H1 (cell line): ENCODE measurements at regions of chr11 and their contacts with region 1.

Region 1: DNA sequence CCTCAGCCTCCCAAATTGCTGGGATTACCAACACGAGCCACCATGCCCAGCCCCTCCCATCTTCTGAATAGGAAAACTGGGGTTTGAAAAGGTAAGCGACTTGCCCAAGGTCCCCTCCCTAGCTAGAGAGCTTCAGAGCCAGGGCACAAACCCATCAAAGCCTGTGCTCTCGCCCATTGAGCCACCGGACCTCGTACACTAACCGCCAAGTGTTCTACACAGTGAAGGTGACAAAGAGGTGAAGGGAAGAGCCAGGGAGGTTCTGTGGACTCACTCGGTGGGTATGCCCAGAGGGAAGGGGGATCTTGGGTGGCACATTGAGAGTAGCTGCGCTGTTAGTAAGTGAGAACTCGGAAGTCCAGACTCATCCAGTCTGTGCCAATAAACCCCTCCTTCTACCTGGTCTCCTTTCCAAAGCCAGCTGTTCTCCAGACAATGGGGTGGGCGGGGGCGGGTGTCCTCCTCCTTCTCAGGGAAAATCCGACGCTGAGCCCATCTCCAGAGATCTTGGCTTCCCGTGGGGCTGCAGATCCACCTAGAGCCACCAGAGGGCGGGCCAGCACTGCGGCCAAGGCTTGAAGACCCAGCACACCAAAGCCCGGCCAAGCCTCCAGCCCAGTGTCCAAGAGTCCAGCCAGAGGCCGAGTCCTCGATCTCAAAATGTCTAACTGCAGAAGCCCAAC is 3.2 kb upstream of the RTN4RL2 start:
- DNase-seq: peak in 1 of 2 experiments; percentile 97
- H3K4me3 ChIP-seq: peak overlapping the region; percentile 62 to 97 (median 74); a peak in 7 of 8 replicates
- H3K27ac ChIP-seq: no peak overlapping the region
- H3K4me1 ChIP-seq: peaks cover 0 to 20% (median 11%) of the 10 kb centered on the region in 4 experiments; a peak in 6 of 7 replicates
- H3K27me3 ChIP-seq: peaks cover 8 to 30% (median 23%) of the 10 kb centered on the region in 4 experiments
- CTCF ChIP-seq: peak; percentile 92 to 97 (median 95)
- EP300 ChIP-seq: peak in 1 of 2 experiments; percentile 60; a peak in 1 of 3 replicates
- POLR2A ChIP-seq: no peak
- RAD21 ChIP-seq: peak; percentile 89 to 93

Region 2: DNA sequence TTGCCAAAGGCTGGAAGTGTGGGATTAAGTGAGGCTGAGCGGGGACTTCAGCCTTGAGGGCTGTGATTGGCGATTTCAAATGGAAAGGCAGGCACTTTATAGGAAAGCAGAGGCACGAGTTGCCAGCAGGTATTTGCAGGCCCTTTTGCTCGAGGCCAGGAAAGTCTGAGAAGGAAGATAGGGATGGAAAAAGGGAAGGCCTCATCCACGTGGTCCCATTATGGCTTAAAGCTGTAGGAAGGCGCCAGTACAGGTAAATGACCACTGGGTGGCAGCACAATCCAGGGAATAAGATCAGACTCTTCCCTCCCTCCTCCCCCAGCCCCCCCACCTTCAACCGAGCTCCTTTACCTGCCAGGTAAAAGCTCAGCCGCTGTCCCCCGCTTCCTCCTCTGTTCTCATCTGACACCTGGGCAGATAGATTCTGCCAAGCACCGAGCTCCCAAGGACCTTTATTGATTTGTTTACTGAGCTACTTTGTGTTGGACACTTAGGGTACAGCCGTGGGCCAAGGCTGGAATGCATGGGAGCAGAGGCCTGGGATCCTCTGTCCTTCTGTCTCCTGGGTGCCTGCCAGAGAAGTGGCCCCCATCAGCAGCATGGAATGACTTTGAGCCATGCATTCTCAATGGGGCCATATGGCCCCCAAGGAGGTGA is 111.4 kb before region 1 on chr11:
- CTCF ChIA-PET with region 1: interaction called, 49 read pairs
- POLR2A ChIA-PET with region 1: interaction called, 5 read pairs
- DNase-seq: peak in 1 of 2 experiments; percentile 85
- H3K4me3 ChIP-seq: no peak overlapping the region
- H3K27ac ChIP-seq: no peak overlapping the region
- H3K4me1 ChIP-seq: peaks cover 5 to 15% (median 8%) of the 10 kb centered on the region in 4 experiments; a peak in 6 of 7 replicates
- H3K27me3 ChIP-seq: peaks cover 0 to 6% (median 4%) of the 10 kb centered on the region in 4 experiments; a peak in 4 of 7 replicates
- CTCF ChIP-seq: peak; percentile 61 to 76 (median 73)
- EP300 ChIP-seq: no peak
- POLR2A ChIP-seq: no peak
- RAD21 ChIP-seq: peak; percentile 84 to 89

Region 3: DNA sequence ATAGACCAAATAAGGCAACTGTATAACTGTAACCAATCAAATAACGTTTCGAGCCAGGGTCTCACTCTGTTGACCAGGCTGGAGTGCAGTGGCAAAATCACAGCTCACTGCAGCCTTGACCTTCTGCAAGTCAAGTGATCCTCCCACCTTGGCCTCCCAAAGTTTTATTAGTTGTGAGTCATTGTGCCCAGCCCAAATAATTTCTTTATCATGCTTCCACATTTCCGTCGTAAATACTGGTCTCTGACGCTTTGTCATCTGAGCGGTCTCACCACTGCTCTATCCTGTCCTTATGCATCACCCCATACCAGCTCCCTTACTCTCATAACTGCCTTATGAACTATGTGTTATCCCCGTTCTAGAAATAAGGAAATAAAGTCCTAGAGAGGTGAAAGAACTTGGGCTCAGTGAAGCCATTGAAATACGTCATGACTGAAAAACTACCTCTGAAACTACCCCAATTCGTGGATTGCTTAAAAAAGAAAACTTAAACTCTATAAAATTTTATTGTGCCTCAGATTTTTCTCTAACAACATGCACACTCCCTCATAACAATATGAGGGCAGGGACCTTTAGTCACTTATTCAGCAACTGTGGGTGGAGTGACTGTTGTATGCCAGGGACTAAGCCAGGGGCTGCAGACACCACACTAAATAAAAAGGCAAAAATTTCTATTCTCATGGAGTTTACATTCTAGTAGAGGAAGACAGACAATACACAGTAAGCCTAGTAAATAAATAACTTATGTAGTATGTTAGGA is 12.6 kb before region 1 on chr11:
- CTCF ChIA-PET with region 1: interaction called, 97 read pairs
- POLR2A ChIA-PET with region 1: interaction called, 7 read pairs
- DNase-seq: no peak
- H3K4me3 ChIP-seq: no peak overlapping the region
- H3K27ac ChIP-seq: no peak overlapping the region
- H3K4me1 ChIP-seq: no peaks in the 10 kb centered on the region
- H3K27me3 ChIP-seq: no peaks in the 10 kb centered on the region; a peak in 1 of 7 replicates
- CTCF ChIP-seq: no peak
- EP300 ChIP-seq: no peak
- POLR2A ChIP-seq: no peak
- RAD21 ChIP-seq: no peak

Region 4: GRCh38 chr11:57480409-57481137 is 23.5 kb after region 1 on chr11:
- CTCF ChIA-PET with region 1: interaction called, 452 read pairs
- POLR2A ChIA-PET with region 1: interaction called, 141 read pairs
- DNase-seq: peak in 1 of 2 experiments; percentile 97
- H3K4me3 ChIP-seq: no peak overlapping the region
- H3K27ac ChIP-seq: no peak overlapping the region
- H3K4me1 ChIP-seq: peaks cover 7 to 32% (median 9%) of the 10 kb centered on the region in 4 experiments
- H3K27me3 ChIP-seq: peaks cover 0 to 35% (median 26%) of the 10 kb centered on the region in 4 experiments; a peak in 6 of 7 replicates
- CTCF ChIP-seq: peak; percentile 86 to 92 (median 90)
- EP300 ChIP-seq: no peak
- POLR2A ChIP-seq: no peak
- RAD21 ChIP-seq: peak; percentile 61 to 75